Activated T-helper 1 cell treated with anti-CD3 and anti-CD28 coated beads, Interleukin-12 subunit alpha, Interleukin-12 subunit beta, Interleukin-2, Interleukin-4 antibody, amounts not matched to agents 30 ng/mL and 10 ng/mL and 1 ng/mL, durations not matched to agents 14 hours and 24 hours and 36 hours (primary cell): ENCODE measurements at regions of chr12 and their contacts with region 1.

Region 1: DNA sequence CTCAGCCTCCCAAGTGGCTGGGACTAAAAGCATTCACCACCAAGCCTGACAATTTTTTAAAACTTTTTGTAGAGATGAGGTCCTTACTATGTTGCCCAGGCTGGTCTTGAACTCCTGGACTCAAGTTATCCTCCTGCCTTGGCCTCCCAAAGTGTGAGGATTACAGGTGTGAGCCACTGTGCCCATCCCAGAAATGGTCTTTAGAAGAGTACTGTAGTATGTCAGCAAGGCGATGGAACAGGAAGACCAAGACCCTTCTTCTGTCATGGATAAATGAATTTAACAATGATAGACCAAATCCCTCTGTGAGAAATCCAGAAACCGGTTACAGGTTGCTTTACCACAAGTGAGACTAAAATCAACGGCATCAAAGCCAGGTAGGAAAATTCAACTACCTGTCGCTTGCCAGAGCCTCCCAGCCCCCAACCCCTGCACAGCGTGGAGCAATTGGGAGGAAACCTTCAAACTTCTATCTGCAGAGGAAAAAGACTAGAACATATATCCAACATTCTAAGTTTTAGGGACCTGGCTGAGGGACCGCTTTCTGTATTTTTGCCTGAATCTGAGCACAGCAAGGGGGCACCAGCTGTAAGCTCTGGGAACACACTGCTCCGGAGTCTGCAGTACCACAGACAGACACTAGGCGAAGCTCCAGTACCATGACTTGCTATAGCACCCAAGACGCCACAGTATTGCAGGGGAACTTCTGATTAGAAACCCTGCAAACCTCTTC is 51.3 kb downstream of the CPSF6 start:
- DNase-seq: peak; percentile 60
- H3K4me3 Mint-ChIP-seq: no peak overlapping the region
- H3K27ac Mint-ChIP-seq: no peak overlapping the region
- H3K4me1 Mint-ChIP-seq: no peaks in the 10 kb centered on the region
- H3K27me3 Mint-ChIP-seq: peaks cover 27% of the 10 kb centered on the region

Region 2: DNA sequence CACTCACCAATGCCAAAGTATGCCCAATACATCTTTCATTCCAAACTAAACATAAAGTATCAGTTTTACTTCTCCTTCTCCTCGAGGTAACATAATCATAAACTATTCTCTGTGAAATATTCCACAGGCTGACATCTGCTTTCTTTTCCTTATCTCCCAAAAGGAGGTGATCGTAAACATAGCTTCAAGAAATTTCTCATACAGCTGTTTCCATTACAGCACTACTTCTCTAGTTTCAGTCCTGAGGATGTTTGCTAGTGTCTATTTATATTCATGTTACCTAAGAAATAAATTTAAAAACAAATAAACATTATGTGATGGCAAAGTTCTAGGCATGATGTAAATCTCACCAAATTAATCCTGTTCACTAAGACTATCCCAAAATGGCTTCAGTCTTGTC is 141.4 kb before region 1 on chr12:
- intact Hi-C with region 1: no loop called
- DNase-seq: no peak
- H3K4me3 Mint-ChIP-seq: no peak overlapping the region
- H3K27ac Mint-ChIP-seq: no peak overlapping the region
- H3K4me1 Mint-ChIP-seq: peaks cover 13% of the 10 kb centered on the region
- H3K27me3 Mint-ChIP-seq: no peaks in the 10 kb centered on the region

Region 3: GRCh38 chr12:69330475-69331473 is 40.1 kb after region 1 on chr12:
- intact Hi-C with region 1: loop called (anchors 2 kb)
- DNase-seq: peak; percentile 22
- H3K4me3 Mint-ChIP-seq: peak overlapping the region; percentile 72
- H3K27ac Mint-ChIP-seq: peak overlapping the region; percentile 87
- H3K4me1 Mint-ChIP-seq: peaks cover 15% of the 10 kb centered on the region
- H3K27me3 Mint-ChIP-seq: peaks cover 12% of the 10 kb centered on the region

Region 4: GRCh38 chr12:69639400-69640016 is 348.8 kb after region 1 on chr12:
- intact Hi-C with region 1: loop called (anchors 1 kb)
- DNase-seq: peak; percentile 34
- H3K4me3 Mint-ChIP-seq: no peak overlapping the region
- H3K27ac Mint-ChIP-seq: no peak overlapping the region
- H3K4me1 Mint-ChIP-seq: peaks cover 4% of the 10 kb centered on the region
- H3K27me3 Mint-ChIP-seq: peaks cover 5% of the 10 kb centered on the region

Region 5: GRCh38 chr12:69900720-69901131 is 610.0 kb after region 1 on chr12:
- intact Hi-C with region 1: no loop called
- DNase-seq: peak; percentile 29
- H3K4me3 Mint-ChIP-seq: no peak overlapping the region
- H3K27ac Mint-ChIP-seq: no peak overlapping the region
- H3K4me1 Mint-ChIP-seq: no peaks in the 10 kb centered on the region
- H3K27me3 Mint-ChIP-seq: peaks cover 2% of the 10 kb centered on the region